HEK293 (cell line): ENCODE measurements at regions of chr9 and their contacts with region 1.

Region 1: GRCh38 chr9:129726322-129727160 is 26.3 kb downstream of the PTGES start:
- H3K4me3 ChIP-seq: no peak overlapping the region
- H3K27ac ChIP-seq: no peak overlapping the region
- H3K4me1 ChIP-seq: no peaks in the 10 kb centered on the region
- CTCF ChIP-seq: peak; percentile 87

Region 2: DNA sequence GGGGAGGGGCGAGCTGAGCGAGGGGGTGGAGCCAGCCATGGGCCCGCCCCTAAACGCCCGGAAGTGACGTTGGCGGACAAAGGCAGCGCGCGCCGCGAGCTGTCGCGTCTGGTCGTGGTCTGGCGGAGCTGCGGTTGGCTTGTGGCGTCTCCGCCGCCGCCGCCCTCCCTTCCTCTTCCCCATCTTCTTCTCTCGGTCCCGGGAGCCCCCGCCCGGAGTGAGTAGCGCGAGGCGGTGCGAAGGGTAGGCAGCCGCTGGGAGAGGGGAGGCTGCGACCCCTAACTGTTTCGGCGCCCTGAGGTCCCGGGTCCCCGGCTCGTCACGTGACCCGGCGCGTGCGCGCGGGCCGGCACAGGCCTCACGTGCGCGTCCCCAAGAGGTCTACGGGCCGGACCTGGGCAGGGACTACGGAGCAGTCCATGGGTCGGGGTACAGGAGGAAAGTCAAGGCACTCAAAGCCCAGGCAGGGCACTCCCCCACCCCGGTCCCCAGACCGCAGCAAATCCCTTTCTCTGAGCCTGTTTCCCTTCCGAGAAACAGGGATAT is 100.4 kb before region 1 on chr9 and contains the start of gene NTMT1:
- CTCF ChIA-PET with region 1: interaction called, 11 read pairs
- POLR2A ChIA-PET with region 1: interaction called, 4 read pairs
- H3K4me3 ChIP-seq: peak within 1 kb of the TSS; percentile 62
- H3K27ac ChIP-seq: peak within 1 kb of the TSS; percentile 61
- H3K4me1 ChIP-seq: peaks cover 3% of the 10 kb centered on the region; the same call in 1 of the 2 replicates
- CTCF ChIP-seq: peak; percentile 6; the same call in 1 of the 2 replicates

Region 3: GRCh38 chr9:129696938-129697650 is 29.4 kb before region 1 on chr9:
- CTCF ChIA-PET with region 1: interaction called, 20 read pairs
- POLR2A ChIA-PET with region 1: interaction called, 3 read pairs
- H3K4me3 ChIP-seq: peak overlapping the region; percentile 34
- H3K27ac ChIP-seq: peak overlapping the region; percentile 69; the same call in 1 of the 2 replicates
- H3K4me1 ChIP-seq: no peaks in the 10 kb centered on the region; the same call in 1 of the 2 replicates
- CTCF ChIP-seq: no peak

Region 4: GRCh38 chr9:129776938-129777768 is 50.6 kb after region 1 on chr9:
- CTCF ChIA-PET with region 1: interaction called, 253 read pairs
- POLR2A ChIA-PET with region 1: interaction called, 3 read pairs
- H3K4me3 ChIP-seq: peak overlapping the region; percentile 18
- H3K27ac ChIP-seq: no peak overlapping the region
- H3K4me1 ChIP-seq: no peaks in the 10 kb centered on the region
- CTCF ChIP-seq: no peak

Region 5: GRCh38 chr9:129796029-129796910 is 69.7 kb after region 1 on chr9:
- CTCF ChIA-PET with region 1: interaction called, 253 read pairs
- POLR2A ChIA-PET with region 1: no interaction called
- H3K4me3 ChIP-seq: no peak overlapping the region
- H3K27ac ChIP-seq: no peak overlapping the region
- H3K4me1 ChIP-seq: no peaks in the 10 kb centered on the region
- CTCF ChIP-seq: no peak

Region 6: DNA sequence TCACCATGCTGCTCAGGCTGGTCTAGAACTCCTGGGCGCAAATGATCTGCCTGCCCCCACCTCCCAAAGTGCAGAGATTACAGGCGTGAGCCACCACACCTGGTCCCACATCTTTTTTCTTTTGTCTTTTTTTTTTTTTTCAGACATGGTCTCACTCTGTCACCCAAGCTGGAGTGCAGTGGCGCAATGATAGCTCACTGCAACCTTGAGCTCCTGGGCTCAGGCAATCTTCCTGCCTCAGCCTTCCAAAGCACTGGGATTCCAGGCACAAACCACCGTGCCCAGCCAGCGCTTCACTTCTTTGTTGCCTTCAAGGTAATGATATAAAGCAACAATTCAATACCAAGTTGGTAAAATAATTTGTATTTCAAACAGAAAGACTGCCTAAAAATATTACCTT is 187.5 kb after region 1 on chr9:
- CTCF ChIA-PET with region 1: no interaction called
- POLR2A ChIA-PET with region 1: no interaction called
- H3K4me3 ChIP-seq: no peak overlapping the region
- H3K27ac ChIP-seq: no peak overlapping the region
- H3K4me1 ChIP-seq: no peaks in the 10 kb centered on the region
- CTCF ChIP-seq: no peak